ENCODE measurements at regions of chr16 and their contacts with region 1.

Region 1: DNA sequence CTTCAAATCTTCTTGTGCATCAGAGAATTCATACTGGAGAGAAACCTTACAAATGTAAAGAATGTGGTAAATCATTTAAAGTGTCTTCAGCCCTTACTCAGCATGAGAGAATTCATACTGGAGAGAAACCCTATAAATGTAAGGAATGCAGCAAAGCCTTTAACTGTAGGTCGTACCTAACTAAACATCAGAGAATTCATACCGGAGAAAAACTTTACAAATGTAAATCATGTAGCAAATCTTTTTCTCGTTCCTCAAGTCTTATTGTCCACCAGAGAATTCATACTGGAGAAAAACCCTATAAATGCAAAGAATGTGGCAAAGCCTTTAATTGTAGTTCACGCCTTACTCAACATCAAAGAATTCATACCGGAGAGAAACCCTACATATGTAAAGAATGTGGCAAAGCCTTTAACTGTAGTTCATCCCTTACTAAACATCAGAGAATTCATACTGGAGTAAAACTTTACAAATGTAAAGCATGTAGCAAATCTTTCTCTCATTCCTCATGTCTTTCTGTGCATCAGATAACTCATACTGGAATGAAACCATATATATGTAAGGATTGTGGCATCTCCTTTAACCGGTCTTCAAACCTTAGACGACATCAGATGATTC is 118.5 kb upstream of the ZNF267 start:
- DNase-seq: no peak
- ATAC-seq: no peak
- H3K4me3 ChIP-seq: no peak overlapping the region
- H3K27ac ChIP-seq: no peak overlapping the region
- H3K4me1 ChIP-seq: no peaks in the 10 kb centered on the region
- H3K27me3 ChIP-seq: no peaks in the 10 kb centered on the region
- CTCF ChIP-seq: no peak
- EP300 ChIP-seq: no peak
- POLR2A ChIP-seq: no peak
- RAD21 ChIP-seq: no peak

Region 2: DNA sequence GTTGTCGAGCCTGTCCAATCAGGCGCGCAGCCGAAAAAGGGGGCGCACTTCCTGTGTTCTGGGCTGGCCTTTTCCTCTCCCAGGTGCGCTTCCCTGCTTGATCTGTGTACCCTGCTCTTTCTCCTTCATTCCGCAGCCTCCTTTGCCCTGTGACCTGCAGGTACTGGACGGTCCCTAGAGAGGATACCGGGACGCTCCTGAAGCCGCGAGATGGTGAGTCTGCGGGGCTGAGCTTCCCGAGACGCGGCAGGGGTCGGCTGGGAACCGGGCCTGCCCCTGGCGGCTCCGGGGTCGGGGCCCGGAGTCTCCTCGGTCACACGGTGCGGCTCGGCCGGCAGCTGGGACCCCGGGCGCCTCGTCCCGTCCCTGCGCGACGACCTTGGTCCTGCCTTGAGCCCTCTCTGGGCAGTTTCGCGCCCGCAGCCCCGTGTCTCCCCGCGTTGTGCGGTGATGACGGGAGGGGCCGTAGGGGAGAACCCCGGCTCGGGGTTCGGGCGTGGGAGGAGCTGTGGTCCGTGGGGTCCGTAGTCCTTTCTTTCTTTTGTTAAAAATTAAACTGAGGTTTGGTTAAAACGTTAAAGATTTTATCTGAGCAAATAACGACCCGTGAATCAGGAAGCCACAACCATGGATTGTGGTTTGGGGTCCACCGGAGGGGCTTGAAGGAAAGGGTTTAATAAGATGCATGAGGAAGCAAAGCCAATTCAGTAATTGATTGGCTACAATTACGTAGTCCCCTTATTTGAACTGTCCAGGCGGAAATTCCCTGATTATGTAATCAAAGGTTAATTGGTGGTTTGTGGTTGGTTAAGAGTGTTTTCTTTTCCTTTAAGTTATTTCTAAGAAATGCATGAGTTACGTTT is 54.4 kb before region 1 on chr16:
- CTCF ChIA-PET with region 1: no interaction called
- POLR2A ChIA-PET with region 1: no interaction called
- in situ Hi-C with region 1: no loop called
- intact Hi-C with region 1: no loop called
- DNase-seq: peak; percentile 90
- ATAC-seq: peak; percentile 90
- H3K4me3 ChIP-seq: peak overlapping the region; percentile 75 to 97 (median 86)
- H3K27ac ChIP-seq: peak overlapping the region; percentile 91
- H3K4me1 ChIP-seq: peaks cover 49% of the 10 kb centered on the region
- H3K27me3 ChIP-seq: no peaks in the 10 kb centered on the region; a peak in 1 of 5 replicates
- CTCF ChIP-seq: peak; percentile 55
- EP300 ChIP-seq: peak; percentile 55 to 76; a peak in 3 of 4 replicates
- POLR2A ChIP-seq: peak; percentile 92 to 95
- RAD21 ChIP-seq: no peak; the same call in 1 of the 2 replicates

Region 3: GRCh38 chr16:31734265-31734664 is 20.8 kb before region 1 on chr16:
- CTCF ChIA-PET with region 1: no interaction called
- POLR2A ChIA-PET with region 1: no interaction called
- in situ Hi-C with region 1: no loop called
- intact Hi-C with region 1: loop called (anchors 2 kb)
- DNase-seq: no peak
- ATAC-seq: no peak
- H3K4me3 ChIP-seq: no peak overlapping the region
- H3K27ac ChIP-seq: no peak overlapping the region
- H3K4me1 ChIP-seq: no peaks in the 10 kb centered on the region
- H3K27me3 ChIP-seq: no peaks in the 10 kb centered on the region
- CTCF ChIP-seq: no peak
- EP300 ChIP-seq: no peak
- POLR2A ChIP-seq: no peak
- RAD21 ChIP-seq: no peak

Measured in HepG2 (cell line).